Astrocyte of the cerebellum (primary cell): ENCODE measurements at regions of chr2 and their contacts with region 1.

Region 1: DNA sequence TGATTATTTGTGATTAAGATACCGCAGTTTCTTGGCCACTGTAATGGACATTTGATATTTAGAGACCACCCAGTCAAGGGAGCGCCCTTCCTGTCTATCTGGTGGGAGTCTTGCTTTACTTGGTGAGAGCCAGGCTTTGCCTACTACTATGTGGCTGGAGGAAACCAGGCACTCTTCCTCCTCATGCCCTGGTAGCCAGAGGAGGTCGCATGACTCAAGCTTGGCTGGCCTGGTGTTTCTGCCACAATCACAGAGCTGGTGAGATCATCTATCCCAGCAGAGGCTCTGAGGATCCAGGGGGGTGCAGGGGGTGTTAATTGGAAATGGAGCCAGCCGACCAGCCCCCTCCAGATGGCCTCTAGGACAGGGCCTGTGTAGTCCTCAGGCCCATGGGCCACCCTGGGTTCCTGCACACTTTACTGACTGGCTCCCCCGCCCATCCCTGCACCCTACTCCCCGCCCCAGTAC is 46.8 kb upstream of the BIN1 start:
- DNase-seq: peak; percentile 63
- H3K4me3 ChIP-seq: no peak overlapping the region
- CTCF ChIP-seq: no peak

Region 2: DNA sequence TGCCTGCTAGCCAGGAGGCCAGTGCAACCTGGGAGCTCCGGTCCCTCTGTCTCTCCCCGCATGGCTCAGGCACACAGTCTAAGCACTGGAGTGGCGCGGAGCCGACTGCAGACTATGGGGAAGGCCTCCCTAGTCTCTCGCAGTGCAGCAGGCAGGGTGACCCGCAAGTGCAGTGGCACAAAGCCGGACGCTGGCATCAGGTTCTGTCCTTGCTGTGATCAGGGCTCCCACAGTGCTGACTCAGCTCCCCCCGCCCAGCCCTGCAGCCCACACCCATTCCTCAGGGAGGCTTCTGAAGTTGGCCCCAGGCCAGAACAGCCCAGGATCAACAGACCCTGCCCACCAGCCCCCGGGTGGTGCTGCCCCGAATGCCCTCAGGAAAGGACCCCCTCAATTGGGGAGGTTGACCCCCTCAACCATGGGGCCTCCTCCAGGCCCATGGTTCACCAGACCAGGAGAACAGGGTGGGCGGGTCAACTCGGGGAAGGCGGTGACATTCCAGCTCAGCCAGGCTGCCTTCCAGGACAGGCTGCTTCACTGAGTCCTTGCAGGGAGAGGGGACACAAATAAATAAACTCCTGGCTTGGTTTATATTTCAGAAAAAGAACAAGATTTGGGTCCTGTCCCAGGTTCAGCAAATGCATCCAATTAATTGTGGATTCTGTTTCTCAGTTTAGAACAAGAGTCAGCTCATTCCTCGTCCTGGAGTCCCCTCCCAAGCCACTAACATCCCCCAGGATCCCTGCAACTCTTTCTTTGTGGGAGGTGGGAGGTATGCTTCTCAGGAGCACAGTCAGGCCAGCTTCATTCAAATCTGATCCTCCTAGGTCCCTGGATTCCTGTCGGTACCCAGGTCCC is 59.0 kb before region 1 on chr2:
- in situ Hi-C with region 1: loop called (anchors 5 kb)
- DNase-seq: no peak
- H3K4me3 ChIP-seq: no peak overlapping the region
- CTCF ChIP-seq: no peak